Activated T-helper 1 cell treated with anti-CD3 and anti-CD28 coated beads, Interleukin-12 subunit alpha, Interleukin-12 subunit beta, Interleukin-2, Interleukin-4 antibody, amounts not matched to agents 30 ng/mL and 10 ng/mL and 1 ng/mL, durations not matched to agents 14 hours and 24 hours and 36 hours (primary cell): ENCODE measurements at regions of chr2 and their contacts with region 1.

Region 1: DNA sequence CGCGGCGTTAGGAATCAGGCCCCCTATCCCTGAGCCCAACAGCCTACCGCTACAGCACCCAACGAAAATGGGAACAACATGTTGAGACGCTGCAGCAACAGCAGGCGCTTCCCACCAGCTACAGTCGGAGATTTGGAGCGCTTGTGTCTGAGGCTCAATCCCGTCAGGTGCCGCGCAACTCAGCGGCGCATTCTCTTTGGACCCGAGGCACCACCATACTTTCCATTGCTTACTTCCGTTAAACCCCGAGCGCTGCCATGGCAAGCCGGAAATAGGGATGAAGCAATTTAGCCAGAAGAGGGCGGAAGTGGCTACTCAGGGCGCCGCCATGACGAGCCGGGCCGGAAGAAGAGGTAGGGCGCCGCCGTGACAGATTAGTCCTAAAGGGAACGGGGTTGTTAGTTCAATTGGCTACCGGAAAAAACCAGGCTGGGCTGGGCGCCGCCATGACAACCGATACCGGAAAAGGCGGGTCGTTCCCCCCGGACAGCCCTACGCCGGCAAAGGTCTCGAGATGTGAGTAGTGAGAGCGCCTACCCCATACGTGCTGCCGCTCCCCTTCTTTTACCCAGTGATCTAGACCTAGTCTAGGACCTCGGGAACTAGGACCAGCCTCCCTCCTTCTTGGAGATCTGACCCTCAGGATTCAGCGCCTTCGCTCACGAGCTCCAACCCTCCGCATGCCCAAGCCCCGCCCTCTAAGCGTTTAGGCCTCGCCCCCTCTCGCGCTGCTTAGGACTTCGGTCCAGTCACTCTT is at the start of gene CHCHD5:
- DNase-seq: peak; percentile 94
- H3K4me3 Mint-ChIP-seq: peak within 1 kb of the TSS; percentile 91
- H3K27ac Mint-ChIP-seq: peak within 1 kb of the TSS; percentile 99
- H3K4me1 Mint-ChIP-seq: peaks cover 38% of the 10 kb centered on the region
- H3K27me3 Mint-ChIP-seq: no peaks in the 10 kb centered on the region
- total RNA-seq, gene CHCHD5: 31.3 and 38.9 TPM in 2 replicates

Region 2: DNA sequence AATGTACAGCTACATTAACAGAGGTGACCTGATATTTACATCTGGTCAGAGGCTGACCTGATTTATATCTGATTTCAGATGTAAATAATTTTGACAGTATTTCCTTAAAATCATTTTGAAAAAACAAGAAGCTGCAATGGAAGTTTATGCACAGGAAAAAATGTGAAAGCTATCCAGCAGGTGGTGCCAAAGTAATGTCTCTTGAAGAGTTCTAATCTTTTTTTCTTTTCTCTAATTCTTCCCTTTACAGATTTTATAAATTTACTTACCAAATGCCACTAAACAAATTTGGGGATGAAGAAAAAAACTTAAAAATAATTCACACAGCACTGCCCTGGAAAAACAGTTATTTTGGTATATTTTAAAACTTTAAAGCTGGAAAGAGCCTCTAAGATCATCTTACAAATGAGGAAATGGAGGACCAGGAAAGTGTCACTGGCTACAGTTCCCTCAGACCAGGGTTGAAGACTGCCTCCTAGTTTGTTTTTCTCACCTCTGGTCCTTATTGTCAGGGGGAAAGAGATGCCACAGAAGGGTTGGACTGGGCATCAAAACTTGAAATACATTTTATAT is 462.5 kb before region 1 on chr2:
- intact Hi-C with region 1: loop called (anchors 5 kb)
- DNase-seq: peak; percentile 30
- H3K4me3 Mint-ChIP-seq: no peak overlapping the region
- H3K27ac Mint-ChIP-seq: no peak overlapping the region
- H3K4me1 Mint-ChIP-seq: no peaks in the 10 kb centered on the region
- H3K27me3 Mint-ChIP-seq: no peaks in the 10 kb centered on the region

Region 3: GRCh38 chr2:112275306-112275886 is 308.9 kb before region 1 on chr2 and contains the start of gene ZC3H6:
- intact Hi-C with region 1: loop called (anchors 1 kb)
- DNase-seq: peak; percentile 99
- H3K4me3 Mint-ChIP-seq: peak within 1 kb of the TSS; percentile 91
- H3K27ac Mint-ChIP-seq: peak within 1 kb of the TSS; percentile 97
- H3K4me1 Mint-ChIP-seq: peaks cover 13% of the 10 kb centered on the region
- H3K27me3 Mint-ChIP-seq: peaks cover 2% of the 10 kb centered on the region
- total RNA-seq, gene ZC3H6: 3.3 and 4.3 TPM in 2 replicates

Region 4: DNA sequence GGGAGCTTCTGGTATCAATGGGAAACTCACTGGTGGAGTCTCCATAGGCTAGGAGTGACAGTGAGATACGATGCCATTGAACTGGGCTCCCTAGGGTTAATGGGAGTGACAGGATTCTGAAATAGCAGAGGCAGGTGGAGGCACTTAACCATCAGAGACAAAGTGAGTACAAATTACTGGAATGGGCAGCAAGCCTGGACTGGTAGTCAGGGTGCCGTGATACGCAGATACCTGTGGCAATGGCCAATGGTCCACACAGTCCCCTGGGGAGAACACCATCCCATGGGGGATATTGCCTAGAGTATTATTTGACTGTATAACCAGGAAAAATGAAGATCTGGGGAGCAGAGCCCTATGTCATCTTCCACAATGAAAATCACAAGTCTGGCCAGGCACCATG is 17.4 kb after region 1 on chr2:
- intact Hi-C with region 1: loop called (anchors 2 kb)
- DNase-seq: no peak
- H3K4me3 Mint-ChIP-seq: no peak overlapping the region
- H3K27ac Mint-ChIP-seq: no peak overlapping the region
- H3K4me1 Mint-ChIP-seq: peaks cover 10% of the 10 kb centered on the region
- H3K27me3 Mint-ChIP-seq: no peaks in the 10 kb centered on the region

Region 5: DNA sequence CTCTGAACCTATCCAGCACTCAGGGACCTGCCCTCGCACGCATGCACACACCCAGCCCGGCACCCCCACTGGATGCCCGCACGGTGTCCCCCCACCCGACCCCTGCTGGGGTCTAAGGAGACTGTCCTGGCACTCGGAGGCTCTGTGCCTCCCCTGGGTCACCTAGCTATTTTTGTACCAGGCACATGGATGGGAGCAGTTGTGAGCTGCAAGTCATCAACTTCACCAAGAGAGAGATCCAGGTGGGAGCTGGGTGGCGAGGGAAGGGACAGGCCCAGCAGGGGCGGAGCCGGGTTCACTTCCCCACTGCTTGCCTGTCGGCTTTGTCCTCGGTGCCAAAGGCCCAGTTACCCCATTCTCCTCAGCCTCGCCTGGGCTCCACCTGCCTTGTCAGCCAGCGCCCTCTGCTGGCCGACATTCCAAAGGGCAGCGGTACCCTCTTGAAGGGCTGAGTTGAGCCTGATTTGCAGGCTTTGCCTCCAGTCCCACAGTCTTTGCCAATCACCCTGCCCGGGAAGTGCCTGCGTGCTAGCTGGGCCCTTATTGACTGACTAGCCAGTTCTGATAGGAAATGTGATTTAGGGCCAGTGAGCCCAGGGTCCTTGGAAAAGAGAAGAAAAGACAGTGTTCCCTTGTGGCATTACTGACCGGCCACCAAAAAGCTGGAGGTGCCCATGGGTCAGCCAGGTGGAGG is 142.3 kb after region 1 on chr2:
- intact Hi-C with region 1: loop called (anchors 1 kb)
- DNase-seq: peak; percentile 86
- H3K4me3 Mint-ChIP-seq: no peak overlapping the region
- H3K27ac Mint-ChIP-seq: no peak overlapping the region
- H3K4me1 Mint-ChIP-seq: peaks cover 16% of the 10 kb centered on the region
- H3K27me3 Mint-ChIP-seq: no peaks in the 10 kb centered on the region